Esophagus muscularis mucosa (tissue), 4 donors: ENCODE measurements at regions of chr5 and their contacts with region 1.

Region 1: GRCh38 chr5:40733879-40734563 is 21.7 kb downstream of the TTC33 start:
- DNase-seq: no peak
- H3K4me3 ChIP-seq: no peak overlapping the region
- H3K27ac ChIP-seq: no peak overlapping the region
- H3K4me1 ChIP-seq: peaks cover 27 to 43% (median 35%) of the 10 kb centered on the region in 4 donors
- H3K27me3 ChIP-seq: no peaks in the 10 kb centered on the region
- CTCF ChIP-seq: no peak
- EP300 ChIP-seq: no peak
- POLR2A ChIP-seq: no peak

Region 2: GRCh38 chr5:39714036-39714698 is 1019.9 kb before region 1 on chr5:
- intact Hi-C with region 1: loop called (anchors 5 kb)
- DNase-seq: no peak
- H3K4me3 ChIP-seq: no peak overlapping the region
- H3K27ac ChIP-seq: no peak overlapping the region
- H3K4me1 ChIP-seq: no peaks in the 10 kb centered on the region
- H3K27me3 ChIP-seq: no peaks in the 10 kb centered on the region
- CTCF ChIP-seq: peak; percentile 58 to 66 (median 60)
- EP300 ChIP-seq: no peak
- POLR2A ChIP-seq: no peak

Region 3: DNA sequence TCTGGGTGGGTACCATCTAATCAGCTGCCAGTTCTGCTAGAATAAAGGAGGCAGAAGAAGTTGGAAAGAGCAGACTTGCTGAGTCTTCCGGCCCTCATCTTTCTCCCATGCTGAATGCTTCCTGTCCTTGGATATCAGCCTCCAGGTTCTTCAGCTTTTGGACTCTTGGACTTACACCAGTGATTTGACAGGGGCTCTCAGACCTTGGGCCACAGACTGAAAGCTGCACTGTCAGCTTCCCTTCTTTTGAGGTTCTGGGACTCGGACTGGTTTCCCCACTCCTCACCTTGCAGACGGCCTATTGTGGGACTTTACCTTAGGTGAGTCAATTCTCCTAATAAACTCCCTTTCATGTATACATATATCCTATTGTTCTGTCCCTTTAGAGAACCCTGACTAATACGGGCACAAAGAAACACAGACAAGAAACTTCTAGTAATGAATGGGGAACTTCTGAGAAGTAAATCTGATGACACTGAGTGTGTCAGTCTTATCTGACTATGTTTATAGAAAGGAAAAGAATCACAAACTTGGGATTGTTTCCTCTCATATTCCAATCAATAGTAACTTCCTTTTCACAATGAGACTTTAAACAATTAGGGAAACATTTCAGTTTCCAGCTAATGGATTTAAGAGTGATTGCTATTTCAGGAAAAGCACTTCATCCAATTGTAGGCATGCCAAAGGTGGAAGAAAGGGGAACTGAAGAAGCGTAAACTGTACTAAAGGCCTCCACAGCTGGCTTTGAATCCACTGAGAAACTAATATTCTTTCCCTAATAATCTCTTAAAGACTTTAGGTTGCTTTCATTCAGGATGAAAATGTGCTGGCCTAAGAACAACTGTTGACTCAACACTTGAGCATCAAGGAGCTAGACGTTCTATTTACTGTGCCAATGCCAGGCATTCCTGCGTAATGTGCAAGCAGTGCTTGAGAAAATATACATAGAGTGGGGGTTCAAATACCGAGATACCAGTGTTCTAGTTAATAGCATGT is 182.2 kb before region 1 on chr5:
- intact Hi-C with region 1: no loop called
- DNase-seq: no peak
- H3K4me3 ChIP-seq: no peak overlapping the region
- H3K27ac ChIP-seq: peak overlapping the region; percentile 24 to 49 (median 42)
- H3K4me1 ChIP-seq: peaks cover 0 to 17% (median 15%) of the 10 kb centered on the region in 4 donors
- H3K27me3 ChIP-seq: no peaks in the 10 kb centered on the region
- CTCF ChIP-seq: no peak
- EP300 ChIP-seq: no peak
- POLR2A ChIP-seq: no peak

Region 4: GRCh38 chr5:40823459-40823858 is 89.4 kb after region 1 on chr5:
- intact Hi-C with region 1: no loop called
- DNase-seq: peak; percentile 24
- H3K4me3 ChIP-seq: no peak overlapping the region
- H3K27ac ChIP-seq: no peak overlapping the region
- H3K4me1 ChIP-seq: no peaks in the 10 kb centered on the region
- H3K27me3 ChIP-seq: no peaks in the 10 kb centered on the region
- CTCF ChIP-seq: no peak
- EP300 ChIP-seq: no peak
- POLR2A ChIP-seq: no peak